GM10248 (cell line): ENCODE measurements at regions of chr7 and their contacts with region 1.

Region 1: GRCh38 chr7:105365541-105366534 is 22.9 kb downstream of the SRPK2 start:
- DNase-seq: no peak
- CTCF ChIP-seq: no peak

Region 2: GRCh38 chr7:105285118-105285874 is 80.5 kb before region 1 on chr7:
- CTCF ChIA-PET with region 1: no interaction called
- POLR2A ChIA-PET with region 1: no interaction called
- DNase-seq: no peak
- CTCF ChIP-seq: no peak

Region 3: DNA sequence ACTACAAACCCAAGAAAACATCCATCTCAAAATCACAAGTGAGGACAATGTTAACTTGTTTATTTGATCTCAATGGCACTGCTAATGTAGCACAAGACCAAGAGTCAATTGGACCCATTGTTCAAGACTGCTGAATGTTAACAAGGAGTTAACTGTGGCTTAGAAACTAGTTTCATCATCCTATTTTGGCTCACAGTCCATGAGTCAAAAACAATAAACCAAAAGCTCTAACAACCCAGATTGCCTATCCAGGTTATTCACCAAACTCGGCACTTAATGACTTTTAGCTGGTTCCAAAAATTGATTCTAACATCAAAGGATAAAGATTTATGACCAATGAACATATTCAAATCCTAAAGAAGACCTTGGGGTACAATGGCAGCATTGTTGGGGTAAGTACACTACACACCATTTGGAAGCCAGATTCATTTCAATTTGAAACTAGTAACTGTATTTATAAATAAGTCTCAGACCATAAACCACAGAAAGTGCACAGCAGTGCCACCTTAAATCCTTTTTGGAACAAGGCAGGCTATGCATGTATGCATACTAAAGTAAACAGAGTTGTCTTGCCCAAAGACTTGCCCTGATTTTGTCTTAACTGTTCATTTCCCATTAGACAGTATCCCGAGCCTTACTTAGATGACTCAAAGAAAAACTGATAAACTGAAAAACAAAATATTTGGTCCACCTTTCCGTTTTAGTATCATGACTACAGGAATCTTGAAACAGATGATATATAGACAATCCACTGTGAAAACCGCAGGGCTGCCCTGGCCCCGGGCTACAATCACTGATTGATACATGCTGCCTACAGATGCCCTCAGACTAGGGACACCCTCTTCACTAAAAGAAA is 61.6 kb before region 1 on chr7:
- CTCF ChIA-PET with region 1: no interaction called
- POLR2A ChIA-PET with region 1: no interaction called
- DNase-seq: no peak
- CTCF ChIP-seq: no peak

Region 4: DNA sequence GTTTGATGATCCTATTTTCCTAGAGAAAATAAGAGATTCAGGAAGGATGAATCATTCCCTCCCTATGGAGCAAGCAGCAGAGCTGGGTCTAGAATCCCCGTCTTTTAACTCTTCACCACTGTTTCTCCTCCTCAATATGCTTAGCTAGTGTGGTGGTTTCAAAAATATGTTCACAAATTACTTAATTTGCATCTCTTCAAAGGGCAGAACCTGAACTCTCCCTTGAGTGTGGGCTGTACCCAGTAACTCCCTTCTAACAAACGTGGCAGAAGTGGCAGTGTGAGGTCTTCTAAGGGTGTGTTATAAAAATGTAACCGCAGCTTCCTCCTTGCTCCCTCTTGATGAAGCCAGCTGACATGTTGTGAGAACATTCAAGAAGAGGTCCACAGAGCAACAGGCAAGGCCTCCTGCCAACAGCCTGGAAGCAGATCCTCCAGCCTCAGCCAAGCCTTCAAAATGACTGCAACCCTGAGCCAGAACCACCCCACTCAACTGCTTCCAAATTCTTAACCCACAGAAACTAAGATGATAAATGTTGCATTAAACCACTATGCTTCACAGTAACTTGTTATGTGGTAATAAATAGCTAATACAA is 13.7 kb before region 1 on chr7:
- CTCF ChIA-PET with region 1: interaction called, 12 read pairs
- POLR2A ChIA-PET with region 1: interaction called, 4 read pairs
- DNase-seq: peak; percentile 73
- CTCF ChIP-seq: no peak